CD8-positive, alpha-beta T cell (primary cell): ENCODE measurements at regions of chr12 and their contacts with region 1.

Region 1: DNA sequence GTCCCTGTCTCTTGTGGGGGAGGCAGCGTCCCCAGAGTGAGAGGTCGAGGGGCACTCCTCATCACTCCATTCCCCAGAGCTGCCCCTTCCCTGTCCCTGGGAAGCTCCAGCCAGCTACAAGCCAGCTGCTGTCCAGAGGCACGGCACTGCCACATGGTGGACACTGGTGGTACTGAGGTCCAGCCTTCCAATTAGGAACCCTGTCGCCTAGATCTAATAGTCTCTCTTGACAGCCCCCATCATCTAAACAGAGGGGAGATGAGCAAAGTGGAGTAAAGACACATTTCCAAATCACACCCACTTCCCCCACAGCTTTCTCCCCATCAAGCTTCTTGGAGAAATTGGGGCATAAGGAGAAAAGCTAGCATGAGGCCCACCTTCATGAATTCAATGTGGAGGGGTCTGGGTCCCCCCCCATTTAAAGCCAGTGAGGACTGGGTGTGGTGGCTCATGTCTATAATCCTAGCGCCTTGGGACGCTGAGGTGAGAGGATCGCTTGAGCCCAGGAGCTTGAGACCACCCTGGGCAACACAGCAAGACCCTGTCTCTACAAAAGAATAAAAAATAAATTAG is 2.1 kb upstream of the INHBE start:
- DNase-seq: peak in 5 of 9 experiments; percentile 32 to 62 (median 44)
- ATAC-seq: peak; percentile 54
- H3K4me3 ChIP-seq: no peak overlapping the region
- H3K4me3 Mint-ChIP-seq: no peak overlapping the region
- H3K27ac ChIP-seq: no peak overlapping the region
- H3K27ac Mint-ChIP-seq: no peak overlapping the region
- H3K4me1 ChIP-seq: peaks cover 9% of the 10 kb centered on the region
- H3K4me1 Mint-ChIP-seq: peaks cover 7% of the 10 kb centered on the region
- H3K27me3 ChIP-seq: no peaks in the 10 kb centered on the region
- H3K27me3 Mint-ChIP-seq: no peaks in the 10 kb centered on the region
- CTCF ChIP-seq: peak; percentile 37

Region 2: GRCh38 chr12:56684745-56685359 is 768.2 kb before region 1 on chr12:
- CTCF ChIA-PET with region 1: no interaction called
- POLR2A ChIA-PET with region 1: no interaction called
- intact Hi-C with region 1: no loop called
- DNase-seq: peak in 1 of 9 experiments; percentile 42
- ATAC-seq: no peak
- H3K4me3 ChIP-seq: peak overlapping the region; percentile 38 to 99
- H3K4me3 Mint-ChIP-seq: peak overlapping the region; percentile 98
- H3K27ac ChIP-seq: peak overlapping the region; percentile 97 to 98
- H3K27ac Mint-ChIP-seq: peak overlapping the region; percentile 99
- H3K4me1 ChIP-seq: peaks cover 66% of the 10 kb centered on the region
- H3K4me1 Mint-ChIP-seq: peaks cover 56% of the 10 kb centered on the region
- H3K27me3 ChIP-seq: no peaks in the 10 kb centered on the region
- H3K27me3 Mint-ChIP-seq: no peaks in the 10 kb centered on the region
- CTCF ChIP-seq: no peak

Region 3: GRCh38 chr12:57261428-57261865 is 191.6 kb before region 1 on chr12:
- CTCF ChIA-PET with region 1: interaction called, 18 read pairs
- POLR2A ChIA-PET with region 1: no interaction called
- intact Hi-C with region 1: loop called (anchors 1 to 5 kb)
- DNase-seq: no peak
- ATAC-seq: no peak
- H3K4me3 ChIP-seq: no peak overlapping the region
- H3K4me3 Mint-ChIP-seq: no peak overlapping the region
- H3K27ac ChIP-seq: no peak overlapping the region
- H3K27ac Mint-ChIP-seq: no peak overlapping the region
- H3K4me1 ChIP-seq: no peaks in the 10 kb centered on the region
- H3K4me1 Mint-ChIP-seq: peaks cover 5% of the 10 kb centered on the region
- H3K27me3 ChIP-seq: no peaks in the 10 kb centered on the region
- H3K27me3 Mint-ChIP-seq: no peaks in the 10 kb centered on the region
- CTCF ChIP-seq: no peak

Region 4: DNA sequence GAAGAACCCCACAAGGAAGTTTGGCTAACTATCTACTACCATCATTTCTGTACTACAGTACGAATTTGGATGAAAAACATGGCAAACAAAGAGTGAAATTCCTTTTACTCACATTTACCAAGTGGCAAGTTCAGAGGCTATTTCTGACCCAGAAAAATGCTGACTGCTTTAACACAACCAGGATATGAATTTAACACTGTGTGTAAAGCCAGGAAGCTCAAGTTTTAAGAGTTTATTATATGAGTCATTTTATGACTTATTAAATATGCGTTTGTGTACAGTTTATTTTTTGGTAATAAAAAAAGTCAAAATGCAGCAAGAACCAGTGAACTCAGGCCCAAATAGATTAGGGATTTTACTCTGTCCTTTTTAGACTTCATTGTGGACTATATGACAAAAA is 143.6 kb before region 1 on chr12:
- CTCF ChIA-PET with region 1: interaction called, 8 read pairs
- POLR2A ChIA-PET with region 1: no interaction called
- intact Hi-C with region 1: loop called (anchors 2 to 5 kb)
- DNase-seq: no peak
- ATAC-seq: no peak
- H3K4me3 ChIP-seq: no peak overlapping the region
- H3K4me3 Mint-ChIP-seq: no peak overlapping the region
- H3K27ac ChIP-seq: no peak overlapping the region
- H3K27ac Mint-ChIP-seq: no peak overlapping the region
- H3K4me1 ChIP-seq: no peaks in the 10 kb centered on the region
- H3K4me1 Mint-ChIP-seq: peaks cover 4% of the 10 kb centered on the region
- H3K27me3 ChIP-seq: no peaks in the 10 kb centered on the region
- H3K27me3 Mint-ChIP-seq: no peaks in the 10 kb centered on the region
- CTCF ChIP-seq: no peak

Region 5: DNA sequence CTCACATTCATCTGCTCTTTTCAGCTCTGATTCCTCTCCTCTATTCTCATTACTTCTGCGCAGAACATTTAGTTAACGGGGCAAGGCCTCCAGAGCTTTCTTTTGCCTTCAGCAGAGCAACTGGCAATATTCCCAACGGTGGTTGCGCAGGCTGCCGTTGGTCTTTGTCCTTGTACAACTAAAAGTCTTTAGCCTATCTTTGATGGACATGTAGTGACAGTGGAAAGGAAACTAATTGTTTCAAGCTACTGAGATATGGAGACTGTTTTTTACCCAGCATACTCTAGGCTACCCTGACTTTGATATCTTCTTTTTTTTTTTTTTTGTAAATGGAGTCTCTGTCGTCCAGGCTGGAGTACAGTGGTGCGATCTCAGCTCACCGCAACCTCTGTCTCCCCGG is 34.8 kb before region 1 on chr12:
- CTCF ChIA-PET with region 1: interaction called, 11 read pairs
- POLR2A ChIA-PET with region 1: no interaction called
- intact Hi-C with region 1: no loop called
- DNase-seq: no peak
- ATAC-seq: no peak
- H3K4me3 ChIP-seq: no peak overlapping the region
- H3K4me3 Mint-ChIP-seq: no peak overlapping the region
- H3K27ac ChIP-seq: no peak overlapping the region
- H3K27ac Mint-ChIP-seq: no peak overlapping the region
- H3K4me1 ChIP-seq: no peaks in the 10 kb centered on the region
- H3K4me1 Mint-ChIP-seq: peaks cover 43% of the 10 kb centered on the region
- H3K27me3 ChIP-seq: no peaks in the 10 kb centered on the region
- H3K27me3 Mint-ChIP-seq: no peaks in the 10 kb centered on the region
- CTCF ChIP-seq: no peak

Region 6: GRCh38 chr12:57430931-57431720 is 21.9 kb before region 1 on chr12 and contains the start of gene R3HDM2:
- CTCF ChIA-PET with region 1: interaction called, 17 read pairs
- POLR2A ChIA-PET with region 1: no interaction called
- intact Hi-C with region 1: loop called in 1 of 2 experiments (anchors 2 kb)
- DNase-seq: peak; percentile 91 to 98 (median 96)
- ATAC-seq: peak; percentile 91
- H3K4me3 ChIP-seq: peak within 1 kb of the TSS; percentile 51 to 59
- H3K4me3 Mint-ChIP-seq: peak within 1 kb of the TSS; percentile 98
- H3K27ac ChIP-seq: peak within 1 kb of the TSS; percentile 87 to 96
- H3K27ac Mint-ChIP-seq: peak within 1 kb of the TSS; percentile 100
- H3K4me1 ChIP-seq: peaks cover 26% of the 10 kb centered on the region
- H3K4me1 Mint-ChIP-seq: peaks cover 45% of the 10 kb centered on the region
- H3K27me3 ChIP-seq: no peaks in the 10 kb centered on the region
- H3K27me3 Mint-ChIP-seq: no peaks in the 10 kb centered on the region
- CTCF ChIP-seq: no peak
- total RNA-seq, gene R3HDM2: 93.2 to 103 TPM

Region 7: DNA sequence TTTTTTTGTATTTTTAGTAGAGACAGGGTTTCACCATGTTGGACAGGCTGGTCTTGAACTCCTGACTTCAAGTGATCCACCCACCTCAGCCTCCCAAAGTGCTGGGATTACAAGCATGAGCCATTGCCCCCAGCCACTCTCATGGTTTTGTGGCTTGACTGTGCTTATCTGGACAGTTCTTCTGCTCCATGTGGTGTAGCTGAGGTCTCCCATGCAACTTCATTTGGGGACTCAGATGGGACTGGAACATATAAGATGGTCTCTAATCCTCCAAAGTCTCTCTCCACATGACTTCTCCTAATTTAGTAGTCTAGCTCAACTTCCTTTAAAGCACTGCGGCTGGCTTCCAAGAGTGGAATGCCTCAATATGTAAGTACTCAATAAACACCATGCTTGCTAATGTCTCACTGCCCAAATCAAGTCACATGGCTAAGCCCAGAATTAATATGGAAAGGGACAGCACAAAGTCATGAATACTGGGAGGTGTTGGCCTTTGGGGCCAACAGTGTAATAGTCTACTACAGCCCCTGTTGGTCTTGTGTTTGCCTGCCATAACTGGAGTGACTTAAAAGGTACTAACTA is 11.1 kb before region 1 on chr12:
- CTCF ChIA-PET with region 1: interaction called, 16 read pairs
- POLR2A ChIA-PET with region 1: no interaction called
- intact Hi-C with region 1: no loop called
- DNase-seq: no peak
- ATAC-seq: no peak
- H3K4me3 ChIP-seq: no peak overlapping the region
- H3K4me3 Mint-ChIP-seq: no peak overlapping the region
- H3K27ac ChIP-seq: no peak overlapping the region
- H3K27ac Mint-ChIP-seq: no peak overlapping the region
- H3K4me1 ChIP-seq: no peaks in the 10 kb centered on the region
- H3K4me1 Mint-ChIP-seq: no peaks in the 10 kb centered on the region
- H3K27me3 ChIP-seq: no peaks in the 10 kb centered on the region
- H3K27me3 Mint-ChIP-seq: peaks cover 7% of the 10 kb centered on the region
- CTCF ChIP-seq: no peak

Region 8: GRCh38 chr12:57552835-57553313 is 99.9 kb after region 1 on chr12:
- CTCF ChIA-PET with region 1: no interaction called
- POLR2A ChIA-PET with region 1: no interaction called
- intact Hi-C with region 1: no loop called
- DNase-seq: no peak
- ATAC-seq: no peak
- H3K4me3 ChIP-seq: no peak overlapping the region
- H3K4me3 Mint-ChIP-seq: no peak overlapping the region
- H3K27ac ChIP-seq: no peak overlapping the region
- H3K27ac Mint-ChIP-seq: no peak overlapping the region
- H3K4me1 ChIP-seq: peaks cover 12% of the 10 kb centered on the region
- H3K4me1 Mint-ChIP-seq: peaks cover 20% of the 10 kb centered on the region
- H3K27me3 ChIP-seq: no peaks in the 10 kb centered on the region
- H3K27me3 Mint-ChIP-seq: no peaks in the 10 kb centered on the region
- CTCF ChIP-seq: no peak

Region 9: DNA sequence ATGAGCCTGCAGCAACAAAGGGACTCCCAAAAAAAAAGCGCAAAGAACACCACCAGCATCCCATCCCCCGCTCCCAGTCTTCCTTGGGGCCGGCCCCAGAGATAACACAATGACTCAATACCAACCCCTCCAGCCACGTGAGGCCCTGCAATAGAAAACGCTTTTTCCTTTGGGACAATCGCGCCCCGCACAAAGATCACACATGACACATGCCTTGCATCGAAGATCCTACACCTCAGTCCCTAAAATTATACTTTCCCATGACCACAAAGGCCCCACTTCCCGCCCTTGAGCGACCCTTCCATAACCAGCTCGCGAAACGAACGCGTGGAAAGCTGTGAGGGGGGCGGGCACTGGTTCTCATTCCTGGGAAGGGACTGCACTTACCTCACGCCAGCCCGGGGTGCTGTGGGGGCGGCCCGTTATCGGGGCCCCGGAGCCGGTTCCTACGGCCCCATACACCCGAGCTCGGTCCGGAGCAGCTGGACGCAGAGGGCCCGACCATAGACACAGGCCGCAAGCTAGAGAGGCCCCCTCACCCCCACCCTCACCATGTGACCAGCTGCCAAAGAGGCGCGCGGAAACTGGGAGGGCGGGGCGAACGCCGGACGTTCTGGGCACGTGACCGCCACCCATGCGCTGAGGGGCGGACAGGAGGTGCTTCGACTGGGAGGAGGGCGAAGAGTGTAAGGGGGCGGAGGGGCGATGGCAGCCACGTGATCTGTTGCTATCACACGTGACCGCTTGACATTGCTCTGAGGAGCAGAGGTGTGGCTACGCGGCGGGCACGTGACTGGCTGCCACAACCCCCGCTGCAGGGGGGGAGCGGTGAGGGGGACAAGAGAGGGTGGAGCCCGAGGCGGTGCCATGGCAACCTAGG is 299.0 kb after region 1 on chr12 and contains the start of gene CDK4:
- CTCF ChIA-PET with region 1: no interaction called
- POLR2A ChIA-PET with region 1: no interaction called
- intact Hi-C with region 1: no loop called
- DNase-seq: peak; percentile 96 to 100 (median 99)
- ATAC-seq: peak; percentile 78
- H3K4me3 ChIP-seq: peak within 1 kb of the TSS; percentile 80 to 85
- H3K4me3 Mint-ChIP-seq: peak within 1 kb of the TSS; percentile 90
- H3K27ac ChIP-seq: peak within 1 kb of the TSS; percentile 84 to 92
- H3K27ac Mint-ChIP-seq: peak within 1 kb of the TSS; percentile 88
- H3K4me1 ChIP-seq: peaks cover 50% of the 10 kb centered on the region
- H3K4me1 Mint-ChIP-seq: peaks cover 57% of the 10 kb centered on the region
- H3K27me3 ChIP-seq: no peaks in the 10 kb centered on the region
- H3K27me3 Mint-ChIP-seq: no peaks in the 10 kb centered on the region
- CTCF ChIP-seq: no peak
- total RNA-seq, gene CDK4: 8.5 to 10.0 TPM